Dendritic cell treated with granulocyte-macrophage colony-stimulating factor and Interleukin-4, amounts not matched to agents 40 ng/mL and 50 ng/mL, for 4 days (primary cell): ENCODE measurements at regions of chr1 and their contacts with region 1.

Region 1: GRCh38 chr1:154272217-154272998 is at the start of gene HAX1:
- H3K4me3 Mint-ChIP-seq: peak within 1 kb of the TSS; percentile 89
- H3K27ac Mint-ChIP-seq: peak within 1 kb of the TSS; percentile 97
- H3K4me1 Mint-ChIP-seq: peaks cover 40% of the 10 kb centered on the region
- H3K27me3 Mint-ChIP-seq: no peaks in the 10 kb centered on the region

Region 2: GRCh38 chr1:154183045-154183915 is 89.1 kb before region 1 on chr1:
- intact Hi-C with region 1: loop called (anchors 1 kb)
- H3K4me3 Mint-ChIP-seq: peak overlapping the region; percentile 99
- H3K27ac Mint-ChIP-seq: peak overlapping the region; percentile 97
- H3K4me1 Mint-ChIP-seq: peaks cover 45% of the 10 kb centered on the region
- H3K27me3 Mint-ChIP-seq: no peaks in the 10 kb centered on the region

Region 3: GRCh38 chr1:154220071-154220969 is 52.1 kb before region 1 on chr1 and contains the start of gene UBAP2L:
- intact Hi-C with region 1: loop called (anchors 1 kb)
- H3K4me3 Mint-ChIP-seq: peak within 1 kb of the TSS; percentile 98
- H3K27ac Mint-ChIP-seq: peak within 1 kb of the TSS; percentile 97
- H3K4me1 Mint-ChIP-seq: peaks cover 43% of the 10 kb centered on the region
- H3K27me3 Mint-ChIP-seq: no peaks in the 10 kb centered on the region

Region 4: DNA sequence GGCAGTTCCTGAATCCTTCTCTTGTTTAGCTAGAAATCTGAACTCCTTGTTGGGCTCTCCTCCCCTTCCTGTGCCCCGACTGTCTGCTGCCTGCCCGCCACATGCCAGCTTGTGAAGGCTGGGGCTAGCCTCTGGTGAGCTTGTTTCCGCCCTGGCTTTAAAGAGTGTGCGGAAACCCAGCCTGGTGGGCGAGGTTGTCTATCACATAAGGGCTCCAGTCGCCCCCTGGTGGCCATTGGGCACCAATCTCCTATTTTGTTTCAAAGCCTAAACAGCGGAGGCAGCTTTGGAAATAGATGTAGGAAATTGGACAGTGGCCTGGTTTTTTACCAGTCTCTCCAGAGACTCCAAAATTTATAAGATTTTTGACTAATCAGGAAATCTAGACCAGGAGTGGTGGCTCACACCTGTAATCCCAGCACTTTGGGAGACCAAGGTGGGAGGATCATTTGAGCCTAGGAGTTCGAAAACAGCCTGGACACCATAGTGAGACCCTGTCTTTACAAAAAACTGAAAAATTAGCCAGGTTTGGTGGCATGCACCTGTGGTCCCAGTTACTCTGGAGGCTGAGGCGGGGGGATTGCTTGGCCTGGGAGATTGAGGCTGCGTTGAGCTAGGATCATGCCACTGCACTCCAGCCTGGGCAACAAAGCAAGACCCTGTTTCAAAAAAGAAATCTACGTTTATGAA is 62.8 kb after region 1 on chr1:
- intact Hi-C with region 1: loop called (anchors 5 kb)
- H3K4me3 Mint-ChIP-seq: no peak overlapping the region
- H3K27ac Mint-ChIP-seq: peak overlapping the region; percentile 23
- H3K4me1 Mint-ChIP-seq: peaks cover 32% of the 10 kb centered on the region
- H3K27me3 Mint-ChIP-seq: peaks cover 1% of the 10 kb centered on the region

Region 5: DNA sequence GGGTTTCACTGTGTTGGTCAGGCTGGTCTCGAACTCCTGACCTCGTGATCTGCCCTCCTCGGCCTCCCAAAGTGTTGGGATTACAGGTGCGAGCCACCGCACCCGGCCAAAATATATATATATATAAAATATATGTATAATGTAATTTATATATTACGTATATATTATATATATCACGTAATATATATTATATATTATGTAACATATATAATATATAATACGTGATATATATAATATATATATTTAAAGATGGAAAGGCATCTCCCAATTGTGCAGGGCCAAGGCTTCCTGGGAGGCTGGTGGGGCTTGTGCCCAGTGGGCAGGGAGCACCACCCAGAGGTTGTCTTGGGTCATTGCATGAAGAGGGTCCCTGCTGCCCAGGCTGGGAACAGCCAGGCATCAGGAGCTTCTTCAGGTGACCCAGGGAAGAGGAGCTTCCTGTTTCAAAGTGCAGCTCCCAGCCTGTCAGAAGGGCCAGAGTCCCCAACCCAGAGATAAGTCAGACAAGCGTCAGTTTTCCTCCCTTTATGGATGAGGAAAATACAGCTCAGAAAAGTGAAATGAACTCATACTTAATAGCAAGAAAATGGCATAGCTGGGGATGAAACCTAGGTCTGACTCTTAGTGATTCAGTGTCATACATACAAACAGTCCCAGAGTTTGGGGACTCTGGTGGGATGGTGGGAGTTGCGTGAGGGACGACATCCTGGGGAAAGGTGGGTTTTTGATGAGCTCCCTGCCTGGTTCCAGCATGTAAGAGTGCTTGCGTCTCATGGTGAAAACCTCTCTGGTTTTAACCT is 274.1 kb after region 1 on chr1:
- intact Hi-C with region 1: loop called (anchors 5 kb)
- H3K4me3 Mint-ChIP-seq: no peak overlapping the region
- H3K27ac Mint-ChIP-seq: no peak overlapping the region
- H3K4me1 Mint-ChIP-seq: peaks cover 51% of the 10 kb centered on the region
- H3K27me3 Mint-ChIP-seq: peaks cover 9% of the 10 kb centered on the region